Cardiac septum (tissue), 1 donor: ENCODE measurements at regions of chr4 and their contacts with region 1.

Region 1: GRCh38 chr4:39638354-39639240 is at the start of gene SMIM14:
- DNase-seq: peak; percentile 99
- total RNA-seq, gene SMIM14: 12.1 TPM

Region 2: DNA sequence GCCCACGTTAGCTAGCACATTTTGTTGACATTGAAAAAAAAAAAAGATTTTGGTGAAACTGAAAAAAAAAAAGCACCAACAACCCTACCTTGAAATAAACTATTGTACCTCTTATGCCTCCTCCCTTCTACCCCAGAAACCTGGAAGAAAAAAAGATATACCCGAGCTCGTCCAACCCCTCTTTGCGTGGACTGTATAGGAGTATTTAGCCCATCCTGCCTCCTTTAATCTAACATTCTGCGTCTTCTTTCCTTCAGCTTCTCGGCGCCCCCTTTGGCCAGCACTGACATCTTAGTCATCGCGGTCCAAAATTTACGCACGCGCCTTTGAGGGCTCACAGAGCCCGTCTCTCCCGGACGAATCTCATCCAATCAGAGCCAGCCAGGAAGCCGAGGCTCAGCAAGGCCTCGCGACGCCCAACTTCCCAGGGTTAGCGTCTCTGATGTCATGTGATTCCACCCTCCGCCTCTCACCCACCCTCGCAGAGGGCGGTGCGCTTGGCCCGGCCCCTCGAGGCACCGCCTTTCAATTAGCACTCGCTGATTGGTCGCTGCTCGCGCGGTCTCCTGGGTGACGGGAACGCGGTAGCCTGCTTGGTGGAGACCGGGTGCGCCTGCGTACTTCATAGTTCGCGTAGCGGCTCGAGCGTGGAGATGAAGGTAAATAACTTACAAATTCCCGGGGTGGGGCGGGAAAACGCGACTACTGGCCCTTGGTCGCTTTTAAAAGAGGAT is 456.5 kb before region 1 on chr4 and contains the start of gene WDR19:
- intact Hi-C with region 1: loop called (anchors 10 kb)
- DNase-seq: peak; percentile 100
- total RNA-seq, gene WDR19: 9.4 TPM

Region 3: GRCh38 chr4:39458505-39459300 is 179.9 kb before region 1 on chr4 and contains the starts of genes LIAS and RPL9:
- intact Hi-C with region 1: loop called (anchors 5 kb)
- DNase-seq: peak; percentile 97
- total RNA-seq, gene LIAS: 15.2 TPM
- total RNA-seq, gene RPL9: 532 TPM

Region 4: GRCh38 chr4:39697740-39698423 is 59.3 kb after region 1 on chr4 and contains the start of gene UBE2K:
- intact Hi-C with region 1: loop called (anchors 1 kb)
- DNase-seq: peak; percentile 94
- total RNA-seq, gene UBE2K: 57.0 TPM

Region 5: GRCh38 chr4:39977489-39978377 is 339.1 kb after region 1 on chr4 and contains the start of gene PDS5A:
- intact Hi-C with region 1: loop called (anchors 2 kb)
- DNase-seq: peak; percentile 95
- total RNA-seq, gene PDS5A: 33.1 TPM

Region 6: DNA sequence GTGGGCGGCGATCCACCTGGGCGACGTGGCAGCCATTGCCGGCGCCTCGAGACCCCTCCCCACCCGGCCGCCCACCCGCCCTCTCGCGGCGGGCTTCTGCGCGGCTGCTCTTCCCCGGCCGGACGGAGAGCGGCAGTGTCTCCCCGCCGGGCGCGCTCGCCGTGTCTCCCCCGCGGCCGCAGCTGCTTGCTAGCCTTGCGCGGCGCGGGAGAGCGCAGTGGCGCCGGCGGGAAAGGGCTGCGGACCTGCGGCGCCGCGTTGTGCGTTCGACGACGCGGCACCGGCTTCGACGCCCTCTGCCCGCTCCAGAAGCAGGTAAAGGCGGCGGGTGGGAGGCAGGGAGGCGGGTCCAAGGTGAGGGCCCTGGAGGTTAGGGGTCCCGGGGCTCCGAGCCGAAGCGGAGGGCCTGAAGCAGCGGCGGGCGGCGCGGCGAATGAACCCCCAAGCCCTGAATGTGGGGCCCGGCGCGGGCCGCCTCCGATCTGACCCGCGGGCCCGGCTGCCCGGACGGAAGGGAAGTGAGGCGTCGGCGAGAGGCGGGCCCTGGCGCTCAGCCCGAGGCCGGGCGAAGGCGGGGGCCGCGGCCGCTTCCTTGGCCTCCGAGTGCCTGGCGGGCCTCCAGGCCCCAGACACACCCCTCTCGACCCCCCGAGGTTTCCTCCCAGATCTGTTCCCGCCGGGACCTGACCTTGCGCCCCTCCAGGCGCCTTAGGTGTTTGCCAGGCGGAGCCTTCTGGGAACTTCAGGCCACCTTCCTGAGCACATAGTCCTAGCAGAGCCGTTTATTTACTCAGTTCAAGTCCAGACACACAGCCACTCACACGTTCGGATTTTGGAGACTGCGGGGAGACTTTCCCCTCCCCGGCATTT is 418.4 kb after region 1 on chr4 and contains the start of gene N4BP2:
- intact Hi-C with region 1: loop called (anchors 5 kb)
- DNase-seq: peak; percentile 90
- total RNA-seq, gene N4BP2: 5.2 TPM